Activated CD4-positive, alpha-beta T cell treated with anti-CD3 and anti-CD28 coated beads for 36 hours (primary cell): ENCODE measurements at regions of chr11 and their contacts with region 1.

Region 1: GRCh38 chr11:79018371-79018849 is 422.4 kb downstream of the TENM4 start:
- DNase-seq: peak; percentile 6
- ATAC-seq: peak; percentile 66
- H3K4me3 Mint-ChIP-seq: no peak overlapping the region
- H3K27ac Mint-ChIP-seq: no peak overlapping the region
- H3K4me1 Mint-ChIP-seq: peaks cover 7% of the 10 kb centered on the region
- H3K27me3 Mint-ChIP-seq: peaks cover 21% of the 10 kb centered on the region

Region 2: DNA sequence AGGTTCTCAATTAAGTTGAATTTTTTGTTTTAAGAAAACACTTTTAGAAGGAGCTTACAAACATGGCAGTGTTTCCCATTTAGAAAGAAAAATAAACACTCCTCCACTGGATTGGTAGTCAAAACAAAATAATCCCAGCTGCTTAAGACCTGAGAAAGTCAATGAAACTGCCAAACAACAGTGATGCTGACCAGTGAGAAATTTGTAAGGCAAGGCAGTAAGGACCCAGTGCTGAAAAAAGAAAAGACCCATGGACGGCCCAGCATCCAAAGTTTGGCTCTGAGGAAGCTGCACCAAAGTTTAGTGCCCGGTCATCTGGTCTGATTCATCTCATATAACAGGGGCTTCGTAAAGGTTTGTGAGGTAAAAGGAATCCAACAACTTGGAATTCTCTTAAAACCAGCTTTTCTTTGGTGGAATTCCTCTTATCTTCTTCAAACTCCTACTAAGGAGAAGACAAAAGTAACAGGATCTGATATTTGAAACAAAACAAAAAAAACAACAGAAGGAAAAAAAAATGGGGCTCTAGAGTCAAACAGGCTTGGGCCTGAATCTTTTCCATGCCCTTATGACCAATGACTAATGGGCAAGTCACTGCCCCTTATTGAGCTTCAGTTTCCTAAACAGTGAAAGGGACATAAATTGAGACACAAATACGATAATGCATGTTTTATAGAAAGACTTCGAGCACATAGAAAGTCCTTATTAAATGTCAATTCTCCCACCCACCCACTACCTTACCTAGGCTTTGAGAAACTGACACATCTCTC is 60.7 kb before region 1 on chr11:
- CTCF ChIA-PET with region 1: no interaction called
- POLR2A ChIA-PET with region 1: no interaction called
- intact Hi-C with region 1: loop called in 1 of 2 experiments (anchors 10 kb)
- DNase-seq: no peak
- ATAC-seq: no peak
- H3K4me3 Mint-ChIP-seq: no peak overlapping the region
- H3K27ac Mint-ChIP-seq: no peak overlapping the region
- H3K4me1 Mint-ChIP-seq: no peaks in the 10 kb centered on the region
- H3K27me3 Mint-ChIP-seq: peaks cover 19% of the 10 kb centered on the region